Activated naive CD4-positive, alpha-beta T cell treated with anti-CD3 and anti-CD28 coated beads for 36 hours (primary cell): ENCODE measurements at regions of chr2 and their contacts with region 1.

Region 1: DNA sequence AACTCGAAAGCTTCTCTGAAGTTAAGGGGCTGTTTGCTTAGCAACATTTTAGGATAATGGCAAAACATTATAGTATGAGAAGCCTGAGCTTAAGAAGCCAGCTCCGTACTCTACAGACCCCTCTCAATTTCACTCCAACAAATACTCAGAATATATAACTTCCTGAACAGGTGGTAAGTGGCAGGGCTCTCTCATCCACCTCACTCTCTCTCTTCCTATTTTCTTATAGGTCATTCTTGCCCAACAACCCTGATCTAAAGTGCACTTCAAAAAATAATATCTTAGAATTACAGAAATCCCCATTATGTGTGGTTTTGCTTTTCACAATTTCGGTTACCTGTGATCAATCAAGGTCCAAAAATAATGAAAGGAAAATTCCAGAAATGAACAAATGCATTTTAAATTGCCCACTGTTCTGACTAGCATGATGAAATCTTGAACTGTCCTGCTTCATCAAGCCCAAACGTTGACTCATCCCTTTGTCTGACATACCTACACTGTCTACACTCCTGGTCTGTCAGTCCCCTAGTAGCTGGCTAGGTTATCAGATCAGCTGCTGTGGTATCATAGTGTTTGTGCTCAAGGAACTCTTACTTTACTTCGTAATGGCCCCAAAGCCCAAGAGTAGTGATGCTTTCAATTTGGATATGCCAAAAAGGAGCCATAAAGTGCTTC is 122.8 kb upstream of the COL5A2 start:
- DNase-seq: peak; percentile 41
- H3K4me3 Mint-ChIP-seq: peak overlapping the region; percentile 7
- H3K27ac Mint-ChIP-seq: peak overlapping the region; percentile 91
- H3K4me1 Mint-ChIP-seq: peaks cover 79% of the 10 kb centered on the region
- H3K27me3 Mint-ChIP-seq: no peaks in the 10 kb centered on the region

Region 2: DNA sequence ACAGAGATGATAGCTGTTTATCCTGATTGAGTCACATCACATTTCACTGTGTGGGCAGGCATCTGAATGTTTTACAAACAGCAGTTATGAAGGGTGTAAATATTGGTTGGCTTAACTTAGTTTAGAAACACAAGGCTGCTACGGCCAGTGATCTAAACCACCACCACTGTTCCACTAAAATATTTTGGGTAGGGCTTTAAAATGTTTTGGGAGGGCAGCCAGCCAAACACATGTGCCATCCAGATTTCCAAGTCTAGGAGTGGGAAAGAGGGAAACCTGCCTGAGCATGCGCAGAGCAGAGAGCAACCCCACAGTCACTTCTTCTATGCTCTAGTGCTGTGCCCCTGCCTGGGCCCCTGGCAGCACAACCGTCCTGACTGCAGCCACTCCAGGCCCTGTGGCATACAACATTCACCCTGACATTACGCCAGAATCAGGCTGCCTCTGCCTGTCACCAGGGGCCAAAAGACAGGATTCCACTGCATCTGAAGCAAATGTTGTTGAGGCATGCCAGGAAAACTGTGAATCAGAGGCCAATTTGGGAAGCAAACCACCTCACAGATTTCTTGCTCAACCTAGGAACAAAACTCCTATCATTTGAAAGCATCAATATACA is 48.0 kb before region 1 on chr2:
- CTCF ChIA-PET with region 1: no interaction called
- intact Hi-C with region 1: loop called (anchors 1 kb)
- DNase-seq: no peak
- H3K4me3 Mint-ChIP-seq: no peak overlapping the region
- H3K27ac Mint-ChIP-seq: no peak overlapping the region
- H3K4me1 Mint-ChIP-seq: peaks cover 38% of the 10 kb centered on the region
- H3K27me3 Mint-ChIP-seq: no peaks in the 10 kb centered on the region

Region 3: DNA sequence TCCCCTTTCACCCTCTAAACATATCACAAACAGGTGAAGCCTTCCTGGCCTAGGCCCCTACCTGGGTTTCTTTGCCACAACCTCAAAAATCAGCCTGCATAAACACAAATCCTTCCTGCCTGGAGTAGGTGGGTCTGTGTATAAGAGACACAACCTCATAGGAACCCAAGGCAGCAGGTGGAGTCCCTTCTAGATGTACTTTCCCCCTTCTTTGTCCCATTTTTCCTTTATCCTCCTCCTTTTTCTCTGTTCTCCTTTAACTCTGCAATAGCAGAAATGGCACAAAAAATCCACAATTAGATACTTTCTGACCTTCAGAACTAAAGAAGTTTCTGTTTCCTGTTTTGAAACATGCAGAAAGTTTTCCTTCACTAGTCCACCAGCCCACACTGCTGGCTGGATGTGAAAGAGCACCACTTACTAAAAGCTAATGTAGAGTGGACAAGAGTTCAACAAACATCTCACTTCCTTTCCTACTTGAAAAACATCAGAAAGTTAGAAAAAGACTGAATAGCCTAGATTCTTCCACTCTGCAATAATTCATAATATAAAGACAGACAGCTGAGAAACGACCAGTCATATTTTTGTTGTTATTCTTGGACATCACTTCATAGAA is 267.0 kb after region 1 on chr2:
- CTCF ChIA-PET with region 1: no interaction called
- intact Hi-C with region 1: no loop called
- DNase-seq: no peak
- H3K4me3 Mint-ChIP-seq: peak overlapping the region; percentile 16
- H3K27ac Mint-ChIP-seq: peak overlapping the region; percentile 78
- H3K4me1 Mint-ChIP-seq: peaks cover 37% of the 10 kb centered on the region
- H3K27me3 Mint-ChIP-seq: no peaks in the 10 kb centered on the region

Region 4: GRCh38 chr2:189580658-189581353 is 278.4 kb after region 1 on chr2 and contains the start of gene SLC40A1:
- CTCF ChIA-PET with region 1: no interaction called
- intact Hi-C with region 1: loop called (anchors 5 kb)
- DNase-seq: peak; percentile 67
- H3K4me3 Mint-ChIP-seq: peak within 1 kb of the TSS; percentile 85
- H3K27ac Mint-ChIP-seq: peak within 1 kb of the TSS; percentile 82
- H3K4me1 Mint-ChIP-seq: peaks cover 44% of the 10 kb centered on the region
- H3K27me3 Mint-ChIP-seq: peaks cover 5% of the 10 kb centered on the region
- total RNA-seq, gene SLC40A1: 3.8 to 4.1 TPM

Region 5: DNA sequence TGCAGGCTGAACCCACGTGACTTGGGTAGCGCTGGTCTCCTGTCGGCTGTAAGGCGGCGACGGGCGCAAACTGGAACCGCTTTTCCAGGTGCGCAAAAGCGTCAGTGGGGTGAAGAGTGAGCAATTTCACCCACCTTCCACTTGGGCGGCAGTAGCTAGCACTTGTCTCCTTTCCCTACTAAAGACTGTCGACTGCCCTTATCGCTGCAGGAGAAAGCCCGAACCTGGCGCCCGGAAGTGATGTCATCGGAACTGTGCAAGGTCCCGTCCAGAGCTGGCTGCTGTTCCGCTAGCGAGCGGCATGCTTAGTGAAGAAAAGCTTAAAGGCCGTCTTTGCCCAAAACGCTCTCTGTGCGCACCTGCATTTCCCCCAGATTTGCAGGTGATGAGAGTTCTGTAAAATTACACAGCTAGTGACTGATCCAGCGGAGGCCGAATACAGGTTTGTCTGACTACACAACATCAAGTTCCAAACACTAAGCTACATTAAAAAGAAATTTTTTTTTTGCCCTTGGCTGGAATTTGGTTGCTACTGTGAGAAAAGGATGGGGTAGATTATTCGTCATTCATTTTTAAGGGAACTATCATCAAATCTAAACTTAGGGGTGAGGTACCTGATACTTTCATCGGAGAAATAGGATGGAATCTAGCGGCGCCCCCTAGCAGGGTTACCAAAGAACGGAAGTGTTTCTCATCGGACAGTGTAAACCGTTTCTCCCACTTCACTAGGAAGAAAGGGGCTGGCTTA is 460.3 kb after region 1 on chr2 and contains the start of gene OSGEPL1:
- CTCF ChIA-PET with region 1: no interaction called
- intact Hi-C with region 1: loop called (anchors 5 kb)
- DNase-seq: peak; percentile 95
- H3K4me3 Mint-ChIP-seq: peak within 1 kb of the TSS; percentile 92
- H3K27ac Mint-ChIP-seq: peak within 1 kb of the TSS; percentile 97
- H3K4me1 Mint-ChIP-seq: peaks cover 13% of the 10 kb centered on the region
- H3K27me3 Mint-ChIP-seq: no peaks in the 10 kb centered on the region
- total RNA-seq, gene OSGEPL1: 15.5 to 15.8 TPM

Region 6: GRCh38 chr2:191020221-191020741 is 1717.9 kb after region 1 on chr2:
- CTCF ChIA-PET with region 1: no interaction called
- intact Hi-C with region 1: loop called (anchors 10 kb)
- DNase-seq: peak; percentile 93
- H3K4me3 Mint-ChIP-seq: no peak overlapping the region
- H3K27ac Mint-ChIP-seq: no peak overlapping the region
- H3K4me1 Mint-ChIP-seq: peaks cover 36% of the 10 kb centered on the region
- H3K27me3 Mint-ChIP-seq: no peaks in the 10 kb centered on the region